Activated CD4-positive, alpha-beta memory T cell treated with anti-CD3 and anti-CD28 coated beads for 36 hours (primary cell): ENCODE measurements at regions of chr1 and their contacts with region 1.

Region 1: DNA sequence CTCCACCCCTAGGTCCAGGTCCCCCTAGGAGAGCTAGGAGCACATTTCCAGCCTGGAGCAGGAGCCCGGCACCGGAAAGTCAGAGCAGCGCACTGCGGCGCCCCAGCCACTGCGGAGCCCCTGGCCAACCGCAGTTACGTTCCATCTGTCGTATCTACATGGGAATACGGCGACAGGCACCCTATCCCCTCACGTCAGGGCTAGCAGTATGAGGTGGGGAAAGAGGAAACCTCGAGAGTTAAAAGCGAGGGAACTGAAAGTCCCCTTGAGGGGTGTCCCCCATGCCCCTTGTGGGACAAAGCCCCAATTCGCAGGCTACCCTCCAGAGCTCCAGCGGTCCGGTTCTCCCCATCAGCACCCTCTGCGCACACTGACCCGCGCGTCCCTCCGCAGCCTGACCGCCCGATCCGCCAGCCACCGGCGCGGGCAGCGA is 995 bp downstream of the COLGALT2 start:
- DNase-seq: peak; percentile 23
- H3K4me3 Mint-ChIP-seq: peak overlapping the region; percentile 62
- H3K27ac Mint-ChIP-seq: no peak overlapping the region
- H3K4me1 Mint-ChIP-seq: peaks cover 12% of the 10 kb centered on the region
- H3K27me3 Mint-ChIP-seq: peaks cover 50% of the 10 kb centered on the region

Region 2: DNA sequence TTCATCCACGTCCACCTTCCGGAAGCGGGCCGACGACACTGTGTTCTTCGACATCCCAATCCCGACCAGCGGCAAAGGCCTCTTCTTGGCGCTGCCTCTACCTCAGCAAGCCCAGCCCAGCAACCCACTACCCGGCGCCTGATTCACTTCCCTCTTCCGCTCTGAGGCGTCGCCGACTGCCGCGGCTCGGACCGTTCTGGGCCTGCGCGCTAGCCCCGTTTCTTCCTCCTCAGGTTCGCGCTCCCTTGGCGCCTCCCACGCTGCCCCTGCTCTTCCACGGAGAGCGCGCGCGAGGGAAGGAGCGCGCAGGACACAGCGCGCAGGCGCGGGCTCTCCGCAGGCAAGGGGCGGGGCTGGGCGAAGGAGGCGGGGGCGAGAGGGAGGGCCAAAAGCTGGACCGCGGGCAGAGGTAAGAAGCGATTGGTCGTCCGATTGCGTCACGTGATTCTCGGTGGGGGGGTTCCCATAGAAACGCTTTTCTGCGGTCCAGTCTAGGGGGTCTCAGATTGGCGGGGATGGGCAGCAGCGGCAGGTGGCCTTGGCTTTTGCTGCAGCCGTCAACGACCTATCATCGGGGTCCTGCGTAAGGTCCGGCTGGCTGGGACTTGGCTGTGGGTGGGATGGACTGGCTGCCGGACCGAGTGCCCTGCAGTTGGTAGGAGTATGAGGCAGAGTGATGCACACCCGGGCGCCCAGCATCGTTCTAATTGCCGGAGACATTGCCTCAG is 400.8 kb before region 1 on chr1 and contains the start of gene ARPC5:
- CTCF ChIA-PET with region 1: no interaction called
- POLR2A ChIA-PET with region 1: no interaction called
- intact Hi-C with region 1: loop called (anchors 2 kb)
- DNase-seq: peak; percentile 98
- H3K4me3 Mint-ChIP-seq: peak within 1 kb of the TSS; percentile 95
- H3K27ac Mint-ChIP-seq: peak within 1 kb of the TSS; percentile 99
- H3K4me1 Mint-ChIP-seq: peaks cover 33% of the 10 kb centered on the region
- H3K27me3 Mint-ChIP-seq: no peaks in the 10 kb centered on the region
- total RNA-seq, gene ARPC5: 158 to 161 TPM

Region 3: GRCh38 chr1:183989078-183989577 is 47.4 kb before region 1 on chr1:
- CTCF ChIA-PET with region 1: no interaction called
- POLR2A ChIA-PET with region 1: no interaction called
- intact Hi-C with region 1: loop called (anchors 1 kb)
- DNase-seq: peak; percentile 79
- H3K4me3 Mint-ChIP-seq: no peak overlapping the region
- H3K27ac Mint-ChIP-seq: no peak overlapping the region
- H3K4me1 Mint-ChIP-seq: peaks cover 19% of the 10 kb centered on the region
- H3K27me3 Mint-ChIP-seq: no peaks in the 10 kb centered on the region

Region 4: DNA sequence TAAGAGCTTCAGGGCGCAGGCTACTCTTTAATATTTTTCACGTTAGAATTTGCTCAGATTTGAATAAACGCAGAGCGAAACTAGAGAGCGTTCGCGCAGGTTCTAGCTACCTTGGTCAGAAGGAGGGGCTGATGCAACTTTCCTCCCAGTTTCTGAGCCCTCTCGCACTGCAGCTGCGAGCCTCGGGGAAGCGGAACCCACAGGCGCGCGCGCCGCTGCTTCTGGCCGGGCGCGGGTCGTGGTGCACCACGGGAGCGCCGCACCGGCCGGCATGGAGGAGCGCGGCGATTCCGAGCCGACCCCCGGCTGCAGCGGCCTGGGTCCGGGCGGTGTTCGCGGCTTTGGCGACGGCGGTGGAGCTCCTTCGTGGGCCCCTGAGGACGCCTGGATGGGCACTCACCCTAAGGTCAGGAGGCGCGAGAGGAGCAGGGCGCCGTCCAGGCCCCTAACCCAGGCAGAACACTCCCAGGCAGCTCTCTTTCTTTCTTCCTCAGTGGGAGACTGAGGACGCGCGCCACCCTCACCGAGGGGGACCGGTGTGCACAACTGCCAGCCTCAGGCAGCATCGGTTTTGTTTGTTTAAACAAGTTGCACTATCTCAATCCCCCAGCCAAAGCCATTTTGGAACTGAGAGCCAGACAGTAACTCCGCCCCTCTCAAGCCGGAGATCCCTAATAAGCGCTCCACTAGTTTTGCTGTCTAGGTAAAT is 15.1 kb after region 1 on chr1 and contains the start of gene TSEN15:
- CTCF ChIA-PET with region 1: interaction called, 5 read pairs
- POLR2A ChIA-PET with region 1: interaction called, 14 read pairs
- intact Hi-C with region 1: loop called (anchors 1 kb)
- DNase-seq: peak; percentile 85
- H3K4me3 Mint-ChIP-seq: peak within 1 kb of the TSS; percentile 98
- H3K27ac Mint-ChIP-seq: peak within 1 kb of the TSS; percentile 96
- H3K4me1 Mint-ChIP-seq: peaks cover 33% of the 10 kb centered on the region
- H3K27me3 Mint-ChIP-seq: peaks cover 6% of the 10 kb centered on the region
- total RNA-seq, gene TSEN15: 44.1 to 44.3 TPM